Activated T-helper 2 cell treated with anti-CD3 and anti-CD28 coated beads, Interferon-gamma antibody, Interleukin-2, Interleukin-4, amounts not matched to agents 10 μg/mL and 5 μg/mL and 100 μg/mL, durations not matched to agents 14 hours and 24 hours and 36 hours (primary cell): ENCODE measurements at regions of chr3 and their contacts with region 1.

Region 1: DNA sequence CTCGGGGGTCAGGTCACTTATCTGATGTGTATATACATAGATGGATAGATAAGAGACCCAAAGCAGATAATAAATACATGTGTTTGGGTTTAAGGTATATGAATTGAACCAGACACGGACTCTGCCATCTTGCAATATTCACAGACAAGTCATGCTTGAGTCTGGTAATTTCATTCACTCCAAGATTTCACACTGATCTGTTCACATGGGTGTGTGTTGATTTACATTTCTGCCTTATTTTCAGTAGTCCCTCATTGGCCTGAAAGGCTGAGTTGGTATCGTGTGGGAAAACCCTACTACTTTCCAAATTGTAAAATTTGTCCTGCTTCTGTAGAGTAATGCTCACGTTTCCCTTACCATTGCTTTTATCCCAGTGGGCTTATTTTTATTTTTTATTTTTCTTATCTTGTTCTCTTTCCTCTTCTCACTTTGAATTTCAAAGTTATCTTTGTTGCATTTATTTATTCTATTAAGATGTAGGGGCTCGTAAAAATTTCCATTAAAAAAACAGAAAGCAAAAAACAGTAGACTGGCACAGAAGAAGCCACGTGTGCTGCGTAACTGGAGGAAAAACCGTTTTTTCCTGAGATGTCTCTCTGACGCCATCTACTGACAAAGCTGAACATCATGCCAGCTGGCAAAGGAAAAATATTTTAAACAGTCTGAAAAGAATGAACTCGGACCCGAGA is 10.8 kb upstream of the MFSD1 start:
- DNase-seq: no peak
- H3K4me3 Mint-ChIP-seq: peak overlapping the region; percentile 75
- H3K27ac Mint-ChIP-seq: peak overlapping the region; percentile 69
- H3K4me1 Mint-ChIP-seq: peaks cover 3% of the 10 kb centered on the region
- H3K27me3 Mint-ChIP-seq: peaks cover 9% of the 10 kb centered on the region

Region 2: DNA sequence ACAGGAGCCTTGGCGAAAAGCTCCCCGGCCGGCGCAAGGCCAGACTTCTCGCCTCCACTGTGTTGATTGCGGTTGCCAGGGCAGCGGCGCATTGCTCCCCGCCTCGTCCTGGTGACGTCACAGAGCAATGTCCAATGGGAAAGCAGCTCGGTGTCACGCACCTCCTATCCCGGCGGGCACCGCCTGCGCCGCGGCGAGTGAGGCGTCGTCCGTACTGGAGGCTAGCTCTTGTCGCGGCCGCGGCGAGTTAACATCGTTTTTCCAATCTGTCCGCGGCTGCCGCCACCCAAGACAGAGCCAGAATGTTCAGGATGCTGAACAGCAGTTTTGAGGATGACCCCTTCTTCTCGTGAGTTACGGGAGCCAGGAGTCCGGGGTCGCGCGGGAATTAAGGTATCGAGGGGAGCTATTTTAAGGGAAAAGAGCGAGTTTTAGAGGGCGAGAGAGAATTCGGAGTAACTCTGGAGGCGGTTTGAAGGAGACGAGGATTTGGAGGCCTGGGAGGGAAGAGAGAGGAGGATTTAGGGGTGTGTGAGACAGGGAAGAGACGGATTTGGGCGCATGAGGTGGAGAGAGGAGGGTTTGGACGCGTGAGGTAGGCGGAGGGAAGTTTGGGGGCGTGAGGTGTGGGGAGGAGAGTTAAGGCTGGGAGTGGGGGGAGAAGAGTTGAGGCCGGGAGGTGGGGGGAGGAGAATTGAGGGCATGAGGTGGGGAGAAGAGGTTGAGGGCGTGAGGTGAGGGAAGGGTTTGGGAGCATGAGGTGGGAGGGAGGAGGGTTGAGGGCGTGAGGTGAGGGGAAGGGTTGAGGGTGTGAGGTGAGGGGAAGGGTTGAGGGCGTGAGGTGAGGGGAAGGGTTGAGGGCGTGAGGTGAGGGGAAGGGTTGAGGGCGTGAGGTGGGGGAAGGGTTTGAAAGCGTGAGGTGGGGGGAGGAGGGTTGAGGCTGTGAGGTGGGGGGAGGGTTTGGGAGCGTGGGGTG is 219.8 kb before region 1 on chr3 and contains the start of gene MLF1:
- intact Hi-C with region 1: loop called (anchors 10 kb)
- DNase-seq: peak; percentile 81
- H3K4me3 Mint-ChIP-seq: peak within 1 kb of the TSS; percentile 85
- H3K27ac Mint-ChIP-seq: peak within 1 kb of the TSS; percentile 72
- H3K4me1 Mint-ChIP-seq: peaks cover 11% of the 10 kb centered on the region
- H3K27me3 Mint-ChIP-seq: peaks cover 23% of the 10 kb centered on the region
- total RNA-seq, gene MLF1: 2.2 and 3.4 TPM in 2 replicates

Region 3: GRCh38 chr3:158672293-158673176 is 118.5 kb before region 1 on chr3 and contains the start of gene LXN:
- intact Hi-C with region 1: loop called (anchors 2 kb)
- DNase-seq: peak; percentile 74
- H3K4me3 Mint-ChIP-seq: peak within 1 kb of the TSS; percentile 88
- H3K27ac Mint-ChIP-seq: peak within 1 kb of the TSS; percentile 92
- H3K4me1 Mint-ChIP-seq: peaks cover 19% of the 10 kb centered on the region
- H3K27me3 Mint-ChIP-seq: no peaks in the 10 kb centered on the region
- total RNA-seq, gene LXN: 25.8 and 27.2 TPM in 2 replicates

Region 4: GRCh38 chr3:158801696-158802408 is 10.8 kb after region 1 on chr3 and contains the start of gene MFSD1:
- intact Hi-C with region 1: loop called (anchors 1 kb)
- DNase-seq: peak; percentile 86
- H3K4me3 Mint-ChIP-seq: peak within 1 kb of the TSS; percentile 87
- H3K27ac Mint-ChIP-seq: peak within 1 kb of the TSS; percentile 82
- H3K4me1 Mint-ChIP-seq: peaks cover 16% of the 10 kb centered on the region
- H3K27me3 Mint-ChIP-seq: peaks cover 13% of the 10 kb centered on the region
- total RNA-seq, gene MFSD1: 20.2 and 24.1 TPM in 2 replicates